ENCODE measurements at regions of chr10 and their contacts with region 1.

Region 1: GRCh38 chr10:108544494-108545120 is 1378.7 kb downstream of the XPNPEP1 start:
- DNase-seq: peak; percentile 23
- ATAC-seq: peak; percentile 83
- H3K4me3 ChIP-seq: no peak overlapping the region
- H3K27ac ChIP-seq: no peak overlapping the region
- H3K4me1 ChIP-seq: no peaks in the 10 kb centered on the region
- H3K27me3 ChIP-seq: no peaks in the 10 kb centered on the region
- CTCF ChIP-seq: peak; percentile 67
- POLR2A ChIP-seq: no peak
- RAD21 ChIP-seq: peak; percentile 73

Region 2: GRCh38 chr10:106625751-106626150 is 1918.9 kb before region 1 on chr10:
- CTCF ChIA-PET with region 1: no interaction called
- POLR2A ChIA-PET with region 1: no interaction called
- dilution Hi-C with region 1: no loop called
- in situ Hi-C with region 1: no loop called
- intact Hi-C with region 1: loop called (anchors 2 kb)
- DNase-seq: no peak
- ATAC-seq: no peak
- H3K4me3 ChIP-seq: no peak overlapping the region
- H3K27ac ChIP-seq: no peak overlapping the region
- H3K4me1 ChIP-seq: no peaks in the 10 kb centered on the region
- H3K27me3 ChIP-seq: no peaks in the 10 kb centered on the region
- CTCF ChIP-seq: no peak
- POLR2A ChIP-seq: no peak
- RAD21 ChIP-seq: no peak

Region 3: GRCh38 chr10:108375691-108376090 is 168.9 kb before region 1 on chr10:
- CTCF ChIA-PET with region 1: no interaction called
- POLR2A ChIA-PET with region 1: no interaction called
- dilution Hi-C with region 1: no loop called
- in situ Hi-C with region 1: no loop called
- intact Hi-C with region 1: no loop called
- DNase-seq: no peak
- ATAC-seq: no peak
- H3K4me3 ChIP-seq: no peak overlapping the region
- H3K27ac ChIP-seq: no peak overlapping the region
- H3K4me1 ChIP-seq: no peaks in the 10 kb centered on the region
- H3K27me3 ChIP-seq: no peaks in the 10 kb centered on the region
- CTCF ChIP-seq: no peak
- POLR2A ChIP-seq: no peak
- RAD21 ChIP-seq: no peak

Region 4: GRCh38 chr10:108439397-108439796 is 105.2 kb before region 1 on chr10:
- CTCF ChIA-PET with region 1: no interaction called
- POLR2A ChIA-PET with region 1: no interaction called
- dilution Hi-C with region 1: no loop called
- in situ Hi-C with region 1: no loop called
- intact Hi-C with region 1: no loop called
- DNase-seq: no peak
- ATAC-seq: no peak
- H3K4me3 ChIP-seq: no peak overlapping the region
- H3K27ac ChIP-seq: no peak overlapping the region
- H3K4me1 ChIP-seq: no peaks in the 10 kb centered on the region
- H3K27me3 ChIP-seq: no peaks in the 10 kb centered on the region
- CTCF ChIP-seq: no peak
- POLR2A ChIP-seq: no peak
- RAD21 ChIP-seq: no peak

Region 5: DNA sequence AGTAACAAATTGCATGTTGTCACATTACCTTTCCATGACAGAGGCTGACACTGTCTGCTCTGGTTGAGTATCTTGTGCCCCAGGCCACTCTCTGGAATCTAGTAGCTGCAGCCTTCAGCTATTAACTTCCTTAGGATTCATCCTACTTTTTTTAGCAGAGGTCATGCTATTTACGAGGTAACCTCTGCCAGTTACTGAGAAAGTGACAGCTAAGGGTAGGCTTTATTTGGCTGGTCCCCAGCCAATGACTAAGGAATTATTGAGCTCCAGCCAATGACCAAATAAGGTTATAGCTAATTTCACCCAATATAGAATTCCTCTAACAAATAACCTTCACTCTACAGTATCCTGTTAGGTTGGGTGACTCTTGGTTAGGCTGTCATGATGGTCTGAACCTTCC is 17.0 kb after region 1 on chr10:
- CTCF ChIA-PET with region 1: no interaction called
- POLR2A ChIA-PET with region 1: no interaction called
- dilution Hi-C with region 1: no loop called
- in situ Hi-C with region 1: no loop called
- intact Hi-C with region 1: no loop called
- DNase-seq: no peak
- ATAC-seq: no peak
- H3K4me3 ChIP-seq: no peak overlapping the region
- H3K27ac ChIP-seq: no peak overlapping the region
- H3K4me1 ChIP-seq: no peaks in the 10 kb centered on the region
- H3K27me3 ChIP-seq: no peaks in the 10 kb centered on the region
- CTCF ChIP-seq: no peak
- POLR2A ChIP-seq: no peak
- RAD21 ChIP-seq: no peak

Region 6: GRCh38 chr10:109427411-109427810 is 882.8 kb after region 1 on chr10:
- CTCF ChIA-PET with region 1: no interaction called
- POLR2A ChIA-PET with region 1: no interaction called
- dilution Hi-C with region 1: no loop called
- in situ Hi-C with region 1: no loop called
- intact Hi-C with region 1: loop called (anchors 5 kb)
- DNase-seq: peak; percentile 51
- ATAC-seq: peak; percentile 62
- H3K4me3 ChIP-seq: no peak overlapping the region
- H3K27ac ChIP-seq: no peak overlapping the region
- H3K4me1 ChIP-seq: peaks cover 2% of the 10 kb centered on the region; the same call in 1 of the 2 replicates
- H3K27me3 ChIP-seq: no peaks in the 10 kb centered on the region
- CTCF ChIP-seq: peak; percentile 64
- POLR2A ChIP-seq: no peak
- RAD21 ChIP-seq: peak; percentile 76

Measured in IMR-90 (cell line).